ENCODE measurements at regions of chr20 and their contacts with region 1.

Region 1: DNA sequence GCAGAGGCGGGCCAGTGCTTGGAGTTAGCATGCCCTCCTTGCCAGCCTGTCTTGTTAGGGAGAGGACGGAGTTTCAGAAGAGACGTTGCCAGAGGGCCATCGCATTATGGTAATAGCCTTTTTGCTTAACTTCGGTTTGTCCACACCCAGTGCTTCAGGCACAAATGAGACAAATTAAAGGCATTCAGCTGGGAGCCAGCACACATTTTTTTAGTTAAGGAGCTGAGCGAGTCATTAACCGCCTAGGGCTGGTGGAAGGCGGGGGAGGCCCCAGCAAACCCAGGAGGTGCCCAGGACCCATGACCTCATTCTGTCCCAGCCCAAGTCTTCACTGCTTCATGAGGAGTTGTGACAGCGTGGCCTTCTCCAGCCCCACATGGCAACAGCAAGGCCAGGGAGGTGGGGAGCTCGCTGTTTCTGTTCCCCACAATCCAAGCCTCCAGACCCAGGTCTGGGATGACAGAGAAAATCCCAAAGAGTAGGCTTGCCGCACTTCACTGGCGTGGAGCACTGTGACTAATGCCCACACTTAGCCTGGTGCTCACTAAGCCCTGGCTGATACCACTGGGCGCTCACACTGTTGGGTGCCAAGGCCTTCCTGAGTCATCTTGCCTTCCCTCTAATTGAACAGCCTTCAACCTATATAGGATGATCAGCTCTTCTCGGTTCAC is 237.1 kb downstream of the ANKRD60 start:
- DNase-seq: peak; percentile 92
- H3K4me3 Mint-ChIP-seq: peak overlapping the region; percentile 34
- H3K27ac Mint-ChIP-seq: peak overlapping the region; percentile 85
- H3K4me1 Mint-ChIP-seq: peaks cover 22% of the 10 kb centered on the region
- H3K27me3 Mint-ChIP-seq: no peaks in the 10 kb centered on the region
- CTCF ChIP-seq: no peak

Region 2: GRCh38 chr20:57709931-57710799 is 281.2 kb before region 1 on chr20 and contains the start of gene PMEPA1:
- CTCF ChIA-PET with region 1: interaction called, 3 read pairs
- POLR2A ChIA-PET with region 1: interaction called, 8 read pairs
- intact Hi-C with region 1: loop called (anchors 2 kb)
- DNase-seq: peak; percentile 93
- H3K4me3 Mint-ChIP-seq: peak within 1 kb of the TSS; percentile 100
- H3K27ac Mint-ChIP-seq: peak within 1 kb of the TSS; percentile 96
- H3K4me1 Mint-ChIP-seq: peaks cover 47% of the 10 kb centered on the region
- H3K27me3 Mint-ChIP-seq: no peaks in the 10 kb centered on the region
- CTCF ChIP-seq: no peak
- total RNA-seq, gene PMEPA1: 60.6 and 68.5 TPM in 2 replicates

Region 3: DNA sequence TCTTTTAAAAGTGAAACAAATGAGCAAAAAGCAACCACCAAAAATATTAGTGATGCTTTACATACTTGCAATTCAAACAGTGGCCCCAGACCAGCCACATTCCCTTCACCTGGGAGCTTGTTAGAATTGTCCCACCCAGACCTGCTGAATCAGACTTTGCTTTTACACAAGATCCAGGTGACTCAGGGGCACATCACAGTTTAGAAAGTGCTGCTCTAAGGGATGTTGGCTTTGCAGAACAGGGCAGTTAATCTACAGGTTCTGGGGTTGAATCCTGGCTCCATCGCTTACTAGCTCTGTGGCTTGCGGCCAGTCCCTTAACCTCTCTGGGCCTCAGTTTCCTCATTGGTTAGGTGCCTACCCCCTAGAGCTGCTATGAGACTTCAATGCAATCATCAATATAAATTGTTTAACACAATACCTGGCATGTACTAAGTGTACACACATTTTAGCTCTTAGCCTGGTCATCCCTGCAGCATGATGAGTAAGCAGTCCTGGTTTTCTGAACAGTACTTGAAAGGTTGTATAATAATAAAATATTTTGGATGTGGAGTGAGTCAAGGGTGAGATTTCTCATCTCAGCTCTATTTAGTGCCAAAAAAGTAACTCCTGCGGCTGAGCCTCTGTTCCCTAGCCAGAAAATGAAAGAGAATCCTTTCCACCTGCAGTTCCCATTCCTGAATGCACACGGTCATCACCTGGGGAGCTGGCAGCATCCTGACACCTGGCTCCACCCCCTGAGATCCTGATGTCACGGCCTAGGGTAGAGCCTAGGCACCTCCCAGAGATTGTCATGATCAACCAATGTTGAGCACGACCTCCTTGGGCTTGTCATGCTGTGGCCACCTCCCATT is 74.4 kb after region 1 on chr20:
- CTCF ChIA-PET with region 1: no interaction called
- POLR2A ChIA-PET with region 1: interaction called, 23 read pairs
- intact Hi-C with region 1: no loop called
- DNase-seq: peak; percentile 44
- H3K4me3 Mint-ChIP-seq: no peak overlapping the region
- H3K27ac Mint-ChIP-seq: no peak overlapping the region
- H3K4me1 Mint-ChIP-seq: no peaks in the 10 kb centered on the region
- H3K27me3 Mint-ChIP-seq: peaks cover 55% of the 10 kb centered on the region
- CTCF ChIP-seq: no peak